PC-9 (cell line): ENCODE measurements at regions of chr11 and their contacts with region 1.

Region 1: GRCh38 chr11:123438191-123438627 is 8.1 kb downstream of the GRAMD1B start:
- DNase-seq: peak; percentile 75 to 92
- H3K4me3 ChIP-seq: no peak overlapping the region
- H3K27ac ChIP-seq: peak overlapping the region; percentile 72
- H3K4me1 ChIP-seq: peaks cover 52% of the 10 kb centered on the region
- H3K27me3 ChIP-seq: no peaks in the 10 kb centered on the region
- CTCF ChIP-seq: no peak

Region 2: GRCh38 chr11:123454060-123454651 is 15.9 kb after region 1 on chr11:
- CTCF ChIA-PET with region 1: no interaction called
- POLR2A ChIA-PET with region 1: no interaction called
- intact Hi-C with region 1: loop called (anchors 1 kb)
- DNase-seq: peak; percentile 88 to 94
- H3K4me3 ChIP-seq: peak overlapping the region; percentile 43; the same call in 1 of the 2 replicates
- H3K27ac ChIP-seq: peak overlapping the region; percentile 94
- H3K4me1 ChIP-seq: peaks cover 55% of the 10 kb centered on the region
- H3K27me3 ChIP-seq: no peaks in the 10 kb centered on the region
- CTCF ChIP-seq: no peak

Region 3: GRCh38 chr11:123469089-123469488 is 30.9 kb after region 1 on chr11:
- CTCF ChIA-PET with region 1: interaction called, 3 read pairs
- POLR2A ChIA-PET with region 1: interaction called, 14 read pairs
- intact Hi-C with region 1: no loop called
- DNase-seq: no peak
- H3K4me3 ChIP-seq: no peak overlapping the region
- H3K27ac ChIP-seq: no peak overlapping the region
- H3K4me1 ChIP-seq: peaks cover 21% of the 10 kb centered on the region
- H3K27me3 ChIP-seq: no peaks in the 10 kb centered on the region
- CTCF ChIP-seq: no peak

Region 4: DNA sequence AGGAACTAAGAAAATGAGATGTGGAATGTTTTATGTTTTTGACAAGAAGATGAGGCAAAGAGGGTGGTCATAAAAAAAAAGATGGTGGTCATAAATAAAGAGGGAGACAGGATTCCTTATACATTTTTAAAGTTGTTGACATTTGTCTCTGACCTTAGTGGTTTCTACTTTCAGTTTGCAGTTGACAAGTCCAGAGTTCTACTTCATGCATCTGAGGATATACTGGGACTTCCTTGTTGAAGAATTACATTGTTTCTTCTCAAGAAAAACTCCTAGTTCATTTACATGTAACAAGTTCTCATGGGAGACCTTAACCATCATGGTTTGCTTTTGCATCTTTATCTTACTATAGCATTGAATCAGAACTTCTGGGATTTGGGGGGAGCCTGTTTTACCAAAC is 314.9 kb after region 1 on chr11:
- CTCF ChIA-PET with region 1: no interaction called
- POLR2A ChIA-PET with region 1: no interaction called
- intact Hi-C with region 1: no loop called
- DNase-seq: no peak
- H3K4me3 ChIP-seq: no peak overlapping the region
- H3K27ac ChIP-seq: no peak overlapping the region
- H3K4me1 ChIP-seq: no peaks in the 10 kb centered on the region
- H3K27me3 ChIP-seq: peaks cover 57% of the 10 kb centered on the region
- CTCF ChIP-seq: no peak